ENCODE measurements at regions of chr17 and their contacts with region 1.

Region 1: DNA sequence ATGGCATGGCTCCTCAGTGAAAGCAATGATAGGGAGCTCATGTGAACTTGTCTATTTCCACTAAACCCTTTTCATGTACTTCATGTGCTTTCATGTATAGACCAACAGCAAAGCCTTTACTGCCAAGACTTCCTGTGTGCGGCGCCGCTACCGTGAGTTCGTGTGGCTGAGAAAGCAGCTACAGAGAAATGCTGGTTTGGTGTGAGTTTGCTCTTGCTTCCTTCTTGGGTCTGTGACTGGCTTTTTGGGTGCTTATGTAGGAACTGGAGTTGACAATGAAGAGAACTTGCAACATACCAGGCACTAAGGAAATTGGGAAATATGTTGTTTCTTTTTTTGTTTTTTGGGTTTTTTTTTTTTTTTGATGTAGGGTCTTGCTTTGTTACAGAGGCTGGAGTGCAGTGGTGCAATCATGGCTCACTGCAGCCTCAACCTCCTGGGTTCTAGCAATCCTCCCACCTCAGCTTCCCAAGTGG is 5.7 kb downstream of the SNX11 start:
- DNase-seq: peak; percentile 57
- H3K4me3 Mint-ChIP-seq: peak overlapping the region; percentile 15
- H3K27ac Mint-ChIP-seq: peak overlapping the region; percentile 46
- H3K4me1 Mint-ChIP-seq: peaks cover 43% of the 10 kb centered on the region
- H3K27me3 Mint-ChIP-seq: no peaks in the 10 kb centered on the region

Region 2: DNA sequence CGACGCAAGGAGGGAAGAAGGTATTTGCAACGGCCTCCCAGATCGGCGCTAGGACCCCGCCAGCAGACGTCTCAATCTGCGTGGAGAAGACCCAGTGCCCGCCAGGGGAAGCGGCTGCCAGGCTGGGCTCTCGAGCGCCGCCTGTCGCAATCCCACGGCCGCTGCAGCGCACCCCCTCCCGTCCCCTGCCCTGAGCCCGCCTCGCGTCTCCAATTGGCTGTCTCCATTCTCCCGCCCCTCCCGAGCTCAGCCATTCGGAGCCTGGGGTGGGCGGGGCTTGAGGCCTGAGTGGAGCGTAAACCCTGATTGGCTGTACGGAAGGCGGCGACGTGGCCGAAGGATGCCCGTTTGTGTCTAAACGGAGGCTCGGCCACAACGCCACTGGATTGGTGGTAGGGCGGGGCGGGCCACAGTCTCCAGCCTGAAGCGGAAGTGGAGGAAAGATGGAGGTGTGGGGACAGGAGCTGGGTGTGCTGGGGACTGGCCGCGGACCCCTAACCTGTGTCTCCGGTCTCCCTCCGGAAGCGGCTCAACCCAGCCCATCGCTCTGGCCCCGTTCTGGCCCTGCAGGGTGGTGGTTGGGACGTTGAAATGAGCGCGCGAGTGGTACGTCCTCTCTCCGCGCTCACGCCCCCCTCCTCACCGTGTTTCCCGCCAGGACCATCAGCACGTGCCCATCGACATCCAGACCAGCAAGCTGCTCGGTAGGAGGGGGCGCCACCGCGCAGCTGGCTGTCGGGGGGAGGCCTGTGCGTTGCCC is 142.4 kb before region 1 on chr17 and contains the start of gene CDK5RAP3:
- intact Hi-C with region 1: no loop called
- DNase-seq: peak; percentile 100
- H3K4me3 Mint-ChIP-seq: peak within 1 kb of the TSS; percentile 89
- H3K27ac Mint-ChIP-seq: peak within 1 kb of the TSS; percentile 93
- H3K4me1 Mint-ChIP-seq: peaks cover 31% of the 10 kb centered on the region
- H3K27me3 Mint-ChIP-seq: peaks cover 2% of the 10 kb centered on the region
- total RNA-seq, gene CDK5RAP3: 190 and 200 TPM in 2 replicates

Region 3: DNA sequence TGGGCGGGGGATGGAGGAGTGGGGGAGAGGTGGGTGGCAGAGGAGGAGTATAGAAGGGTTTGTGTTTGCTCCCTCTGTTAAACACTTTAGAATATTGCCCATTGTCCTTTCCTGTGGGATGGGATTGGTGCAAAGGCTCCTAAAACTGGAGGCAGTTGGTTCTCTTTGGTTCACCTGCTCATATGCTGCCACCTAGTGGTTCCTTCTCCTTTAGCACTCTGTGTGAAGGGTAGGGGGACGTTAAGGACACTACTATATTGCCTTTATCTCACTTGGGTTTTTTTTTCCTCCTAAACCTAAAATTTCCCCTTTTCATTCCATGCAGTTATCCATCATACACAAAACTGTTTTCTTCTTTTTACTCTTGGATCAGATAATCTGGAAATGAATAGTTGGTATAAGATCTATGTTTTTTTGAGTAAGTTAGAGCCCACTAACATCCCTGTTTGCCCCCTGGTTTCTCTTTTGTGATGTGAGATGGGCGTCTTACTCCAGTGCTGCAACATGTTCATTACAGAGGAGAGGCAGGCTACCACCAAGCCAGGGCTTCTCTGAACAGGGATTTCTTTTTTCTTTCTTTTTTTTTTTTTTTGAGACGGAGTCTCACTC is 18.1 kb after region 1 on chr17:
- intact Hi-C with region 1: loop called (anchors 1 kb)
- DNase-seq: peak; percentile 41
- H3K4me3 Mint-ChIP-seq: no peak overlapping the region
- H3K27ac Mint-ChIP-seq: no peak overlapping the region
- H3K4me1 Mint-ChIP-seq: peaks cover 11% of the 10 kb centered on the region
- H3K27me3 Mint-ChIP-seq: no peaks in the 10 kb centered on the region